HepG2 (cell line): ENCODE measurements at regions of chr14 and their contacts with region 1.

Region 1: GRCh38 chr14:35347323-35348043 is 55.3 kb downstream of the PSMA6 start:
- DNase-seq: peak; percentile 99
- ATAC-seq: peak; percentile 94
- H3K4me3 ChIP-seq: peak overlapping the region; percentile 12 to 69 (median 52)
- H3K27ac ChIP-seq: peak overlapping the region; percentile 72
- H3K4me1 ChIP-seq: peaks cover 75% of the 10 kb centered on the region
- H3K27me3 ChIP-seq: no peaks in the 10 kb centered on the region; a peak in 1 of 5 replicates
- CTCF ChIP-seq: peak; percentile 38
- EP300 ChIP-seq: peak; percentile 91 to 96
- POLR2A ChIP-seq: peak in 1 of 2 experiments; percentile 77; a peak in 2 of 4 replicates
- RAD21 ChIP-seq: peak; percentile 70

Region 2: DNA sequence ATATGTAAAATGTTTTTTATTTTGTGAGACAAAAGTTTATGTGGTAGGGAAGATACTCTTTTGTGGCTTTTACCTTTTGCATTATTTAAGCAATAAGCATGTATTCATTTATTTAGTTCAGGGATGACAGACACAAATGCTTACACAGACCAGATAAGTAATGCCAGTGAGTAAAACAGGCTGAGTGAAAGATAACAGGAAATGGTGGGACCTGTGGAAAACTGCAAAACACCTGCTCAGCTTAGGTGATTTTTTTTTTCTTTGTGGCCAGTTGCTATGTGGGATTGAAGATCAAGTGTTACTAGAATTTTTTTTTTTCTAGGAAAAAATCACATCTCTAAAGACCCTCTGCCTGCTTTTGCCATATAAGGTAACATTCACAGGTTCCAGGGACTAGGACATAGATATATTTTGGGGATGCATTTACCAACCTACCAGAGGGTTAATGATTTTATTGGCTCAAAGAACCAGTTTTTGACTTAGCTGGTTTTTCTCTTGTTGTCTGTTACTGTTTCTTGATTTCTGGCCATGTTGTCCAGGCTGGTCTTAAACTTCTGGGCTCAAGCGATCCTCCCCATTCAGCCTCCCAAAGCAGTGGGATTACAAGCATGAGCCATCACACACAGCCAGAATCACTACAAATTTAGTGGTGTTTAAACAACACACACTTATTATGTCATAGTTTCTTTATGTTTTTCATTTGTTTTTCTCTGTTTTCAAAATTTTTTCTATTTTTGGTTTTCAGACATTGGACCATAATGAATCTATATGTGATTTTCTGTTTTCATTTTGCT is 45.6 kb before region 1 on chr14:
- CTCF ChIA-PET with region 1: no interaction called
- POLR2A ChIA-PET with region 1: no interaction called
- in situ Hi-C with region 1: no loop called
- intact Hi-C with region 1: no loop called
- DNase-seq: no peak
- ATAC-seq: no peak
- H3K4me3 ChIP-seq: no peak overlapping the region
- H3K27ac ChIP-seq: no peak overlapping the region
- H3K4me1 ChIP-seq: peaks cover 25% of the 10 kb centered on the region
- H3K27me3 ChIP-seq: no peaks in the 10 kb centered on the region
- CTCF ChIP-seq: no peak
- EP300 ChIP-seq: no peak
- POLR2A ChIP-seq: no peak
- RAD21 ChIP-seq: no peak

Region 3: DNA sequence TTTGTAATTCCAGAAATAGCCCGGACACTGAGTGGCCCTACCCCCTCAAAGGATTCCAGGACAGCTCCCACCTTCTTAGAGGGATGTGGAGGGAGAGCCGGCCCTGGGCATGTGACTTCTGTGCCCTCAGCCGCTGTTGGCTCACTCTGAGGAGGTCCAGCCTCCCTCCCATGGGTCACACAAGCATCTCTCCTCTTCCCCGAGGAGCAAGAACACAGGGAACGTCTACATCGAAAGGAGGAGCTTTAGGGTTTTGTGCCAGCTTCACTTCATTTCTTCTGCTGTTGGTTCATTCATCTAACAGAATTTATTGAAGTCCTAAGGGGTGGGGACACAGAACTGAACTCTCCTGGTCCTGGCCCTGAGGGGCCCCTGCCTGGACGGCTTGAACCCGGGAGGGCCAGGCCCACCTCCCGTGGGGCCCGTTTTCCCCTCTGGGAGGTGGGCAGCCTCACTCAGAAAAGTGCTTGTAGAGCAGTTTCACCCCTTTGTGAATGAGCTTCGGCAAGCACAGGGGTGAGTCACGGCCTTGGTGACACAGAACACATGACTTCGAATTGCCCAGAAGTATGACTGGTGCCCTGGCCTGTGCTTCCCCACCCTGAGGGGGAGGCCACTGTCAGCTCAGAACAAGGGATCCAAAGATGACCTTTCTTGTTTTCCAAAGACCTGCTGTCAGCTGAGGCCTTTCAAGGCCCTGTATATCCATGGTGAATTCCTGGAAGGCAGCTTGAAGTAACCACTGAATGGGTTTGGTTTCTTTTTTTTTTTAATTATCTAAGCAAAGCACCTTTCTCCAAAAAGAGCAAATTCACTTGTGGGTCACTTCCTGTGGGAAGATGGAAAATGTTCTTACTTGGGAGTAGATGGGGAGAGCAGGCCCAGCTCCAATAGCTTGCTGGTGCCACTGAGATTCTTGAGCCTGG is 17.9 kb after region 1 on chr14:
- CTCF ChIA-PET with region 1: no interaction called
- POLR2A ChIA-PET with region 1: interaction called, 25 read pairs
- in situ Hi-C with region 1: no loop called
- intact Hi-C with region 1: loop called (anchors 1 kb)
- DNase-seq: peak; percentile 98
- ATAC-seq: peak; percentile 87
- H3K4me3 ChIP-seq: peak overlapping the region in 2 of 3 experiments; percentile 1 to 38; a peak in 2 of 6 replicates
- H3K27ac ChIP-seq: no peak overlapping the region
- H3K4me1 ChIP-seq: peaks cover 61% of the 10 kb centered on the region
- H3K27me3 ChIP-seq: 0 out of 5 replicates have a peak, but pooled peaks cover 0 to 6% of the 10 kb centered on the region in 2 experiments
- CTCF ChIP-seq: no peak; the same call in 1 of the 2 replicates
- EP300 ChIP-seq: peak; percentile 73 to 75; a peak in 3 of 4 replicates
- POLR2A ChIP-seq: 0 out of 4 replicates have a peak, but pooled peaks of 1 of the 2 experiments have one; percentile 28
- RAD21 ChIP-seq: peak; percentile 35; the same call in 1 of the 2 replicates

Region 4: GRCh38 chr14:35398071-35398632 is 50.7 kb after region 1 on chr14:
- CTCF ChIA-PET with region 1: no interaction called
- POLR2A ChIA-PET with region 1: interaction called, 473 read pairs
- in situ Hi-C with region 1: no loop called
- intact Hi-C with region 1: no loop called
- DNase-seq: no peak
- ATAC-seq: peak; percentile 4
- H3K4me3 ChIP-seq: no peak overlapping the region; a peak in 1 of 6 replicates
- H3K27ac ChIP-seq: no peak overlapping the region
- H3K4me1 ChIP-seq: peaks cover 79% of the 10 kb centered on the region
- H3K27me3 ChIP-seq: no peaks in the 10 kb centered on the region; a peak in 1 of 5 replicates
- CTCF ChIP-seq: no peak
- EP300 ChIP-seq: no peak
- POLR2A ChIP-seq: no peak
- RAD21 ChIP-seq: no peak

Region 5: DNA sequence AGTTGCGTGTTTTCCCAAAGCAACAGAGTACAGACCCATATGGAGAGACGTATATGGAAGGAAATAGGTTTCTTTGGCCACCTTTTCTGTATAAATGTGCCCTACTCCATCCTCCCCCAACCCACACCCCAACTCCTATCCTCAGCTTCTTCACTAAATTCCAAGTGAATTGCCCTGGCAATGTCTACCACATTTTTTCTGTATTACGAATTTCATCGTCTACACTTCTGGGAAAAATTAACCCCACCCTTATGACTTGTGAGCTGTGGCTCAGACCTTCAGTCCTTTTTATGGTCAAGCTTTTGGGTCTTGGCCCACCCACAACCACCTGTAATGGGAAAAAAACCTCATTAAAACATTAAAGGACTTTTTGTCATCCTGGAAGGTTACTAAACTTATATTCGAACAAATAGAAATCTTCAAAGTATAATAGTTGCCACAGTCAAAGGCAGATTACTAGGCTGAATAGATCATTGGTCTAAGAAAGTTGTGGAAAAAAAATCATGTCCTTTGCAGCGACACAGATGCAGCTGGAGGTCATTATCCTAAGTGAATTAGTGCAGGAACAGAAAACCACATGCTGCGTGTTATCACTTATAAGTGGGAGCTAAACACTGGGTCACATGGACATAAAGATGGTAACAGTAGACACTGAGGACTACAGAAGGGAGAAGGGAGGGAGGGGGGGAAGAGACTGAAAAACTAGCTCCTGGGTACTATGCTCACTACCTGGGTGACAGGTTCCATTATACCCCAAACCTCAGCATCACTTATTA is 72.7 kb after region 1 on chr14:
- CTCF ChIA-PET with region 1: no interaction called
- POLR2A ChIA-PET with region 1: no interaction called
- in situ Hi-C with region 1: no loop called
- intact Hi-C with region 1: no loop called
- DNase-seq: no peak
- ATAC-seq: no peak
- H3K4me3 ChIP-seq: no peak overlapping the region
- H3K27ac ChIP-seq: no peak overlapping the region
- H3K4me1 ChIP-seq: peaks cover 58% of the 10 kb centered on the region
- H3K27me3 ChIP-seq: peaks cover 4 to 12% of the 10 kb centered on the region in 2 experiments; a peak in 3 of 5 replicates
- CTCF ChIP-seq: no peak
- EP300 ChIP-seq: no peak
- POLR2A ChIP-seq: no peak
- RAD21 ChIP-seq: no peak

Region 6: GRCh38 chr14:35480128-35480769 is 132.8 kb after region 1 on chr14:
- CTCF ChIA-PET with region 1: no interaction called
- POLR2A ChIA-PET with region 1: no interaction called
- in situ Hi-C with region 1: no loop called
- intact Hi-C with region 1: no loop called
- DNase-seq: no peak
- ATAC-seq: no peak; the same call in 1 of the 3 replicates
- H3K4me3 ChIP-seq: no peak overlapping the region
- H3K27ac ChIP-seq: no peak overlapping the region
- H3K4me1 ChIP-seq: no peaks in the 10 kb centered on the region
- H3K27me3 ChIP-seq: no peaks in the 10 kb centered on the region; a peak in 1 of 5 replicates
- CTCF ChIP-seq: no peak
- EP300 ChIP-seq: no peak
- POLR2A ChIP-seq: no peak
- RAD21 ChIP-seq: no peak